IMR-90 (cell line): ENCODE measurements at regions of chr6 and their contacts with region 1.

Region 1: DNA sequence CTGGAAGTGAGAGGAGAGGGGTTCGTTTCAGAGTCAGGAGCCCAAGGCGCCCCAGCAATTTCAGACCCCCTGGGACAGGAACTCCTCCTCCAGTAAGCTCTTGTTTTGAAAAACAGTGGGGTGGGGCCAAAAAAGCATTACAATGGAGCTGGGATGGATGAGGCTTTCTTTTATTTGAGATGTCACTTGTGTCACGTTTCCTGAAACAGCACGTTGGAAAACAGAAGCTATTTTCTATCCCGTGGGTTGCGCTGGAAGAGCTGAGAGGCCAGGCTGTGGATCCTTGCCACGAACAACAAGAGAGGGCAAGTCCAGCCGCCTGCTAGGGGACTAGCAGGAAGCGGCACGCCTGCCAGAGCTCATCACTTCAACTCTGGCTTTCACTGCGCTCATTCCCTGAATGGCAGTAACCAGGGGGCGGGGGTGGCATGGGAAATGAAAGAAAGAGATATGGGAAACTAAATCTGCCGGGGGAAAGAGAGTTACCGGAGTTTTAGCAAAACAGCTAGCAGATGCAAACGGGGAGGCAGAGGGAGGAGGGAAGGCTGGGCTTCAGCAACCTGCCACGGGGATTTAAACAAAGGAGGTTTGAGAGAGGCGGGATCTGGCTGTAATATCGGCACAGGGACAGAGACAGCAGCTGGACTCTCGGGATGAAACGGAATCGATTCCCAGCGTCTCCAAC is 34.6 kb downstream of the GCNT2 start:
- DNase-seq: peak; percentile 8
- ATAC-seq: peak; percentile 83
- H3K4me3 ChIP-seq: peak overlapping the region; percentile 37
- H3K27ac ChIP-seq: peak overlapping the region; percentile 41
- H3K4me1 ChIP-seq: 0 out of 2 replicates have a peak, but pooled peaks cover 3% of the 10 kb centered on the region
- H3K27me3 ChIP-seq: no peaks in the 10 kb centered on the region
- CTCF ChIP-seq: no peak
- POLR2A ChIP-seq: no peak
- RAD21 ChIP-seq: no peak

Region 2: DNA sequence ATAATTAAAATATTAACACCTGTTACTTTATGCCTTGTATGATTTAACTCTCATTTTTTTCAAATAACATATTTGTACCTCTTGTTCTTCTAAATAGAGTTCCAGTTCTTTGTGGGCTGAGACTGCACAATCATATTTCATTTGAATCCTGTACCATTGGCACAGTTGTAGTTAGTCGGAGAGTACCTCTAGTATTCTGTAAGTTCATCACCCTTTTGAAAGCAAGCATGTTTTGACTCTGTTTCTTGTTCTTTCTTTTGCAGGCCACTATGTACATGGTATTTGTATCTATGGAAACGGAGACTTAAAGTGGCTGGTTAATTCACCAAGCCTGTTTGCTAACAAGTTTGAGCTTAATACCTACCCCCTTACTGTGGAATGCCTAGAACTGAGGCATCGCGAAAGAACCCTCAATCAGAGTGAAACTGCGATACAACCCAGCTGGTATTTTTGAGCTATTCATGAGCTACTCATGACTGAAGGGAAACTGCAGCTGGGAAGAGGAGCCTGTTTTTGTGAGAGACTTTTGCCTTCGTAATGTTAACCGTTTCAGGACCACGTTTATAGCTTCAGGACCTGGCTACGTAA is 70.5 kb after region 1 on chr6:
- CTCF ChIA-PET with region 1: no interaction called
- POLR2A ChIA-PET with region 1: no interaction called
- dilution Hi-C with region 1: no loop called
- in situ Hi-C with region 1: no loop called
- intact Hi-C with region 1: loop called (anchors 2 kb)
- DNase-seq: peak; percentile 49
- ATAC-seq: peak; percentile 91
- H3K4me3 ChIP-seq: peak overlapping the region; percentile 3; the same call in 1 of the 2 replicates
- H3K27ac ChIP-seq: peak overlapping the region; percentile 66; the same call in 1 of the 2 replicates
- H3K4me1 ChIP-seq: no peaks in the 10 kb centered on the region
- H3K27me3 ChIP-seq: no peaks in the 10 kb centered on the region
- CTCF ChIP-seq: no peak
- POLR2A ChIP-seq: no peak
- RAD21 ChIP-seq: no peak

Region 3: DNA sequence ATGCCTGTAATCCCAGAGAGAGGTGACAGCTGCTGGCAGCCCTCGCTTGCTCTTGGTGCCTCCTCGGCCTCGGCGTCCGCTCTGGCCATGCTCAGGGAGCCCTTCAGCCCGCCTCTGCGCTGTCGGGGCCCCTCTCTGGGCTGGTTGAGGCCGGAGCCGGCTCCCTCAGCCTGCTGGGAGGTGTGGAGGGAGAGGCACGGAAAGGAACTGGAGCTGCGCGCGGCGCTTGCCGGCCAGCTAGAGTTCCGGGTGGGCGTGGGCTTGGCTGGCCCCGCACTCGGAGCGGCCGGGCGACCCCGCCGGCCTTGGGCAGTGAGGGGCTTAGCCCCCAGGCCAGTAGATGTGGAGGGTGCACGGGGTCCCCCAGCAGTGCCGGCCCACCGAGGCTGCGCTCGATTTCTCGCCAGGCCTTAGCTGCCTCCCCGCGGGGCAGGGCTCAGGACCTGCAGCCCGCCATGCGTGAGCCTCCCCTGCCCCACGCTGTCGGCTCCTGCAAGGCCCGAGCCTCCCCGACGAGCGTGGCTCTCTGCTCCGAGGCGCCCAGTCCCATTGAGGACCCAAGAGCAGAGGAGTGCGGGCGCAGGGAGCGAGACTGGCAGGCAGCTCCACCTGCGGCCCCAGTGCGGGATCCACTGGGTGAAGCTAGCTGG is 104.1 kb after region 1 on chr6:
- CTCF ChIA-PET with region 1: no interaction called
- POLR2A ChIA-PET with region 1: no interaction called
- dilution Hi-C with region 1: no loop called
- in situ Hi-C with region 1: no loop called
- intact Hi-C with region 1: no loop called
- DNase-seq: no peak
- ATAC-seq: peak; percentile 54
- H3K4me3 ChIP-seq: peak overlapping the region; percentile 39
- H3K27ac ChIP-seq: no peak overlapping the region
- H3K4me1 ChIP-seq: no peaks in the 10 kb centered on the region
- H3K27me3 ChIP-seq: no peaks in the 10 kb centered on the region; the same call in 1 of the 2 replicates
- CTCF ChIP-seq: no peak
- POLR2A ChIP-seq: no peak
- RAD21 ChIP-seq: no peak